ENCODE measurements at regions of chrX and their contacts with region 1.

Region 1: DNA sequence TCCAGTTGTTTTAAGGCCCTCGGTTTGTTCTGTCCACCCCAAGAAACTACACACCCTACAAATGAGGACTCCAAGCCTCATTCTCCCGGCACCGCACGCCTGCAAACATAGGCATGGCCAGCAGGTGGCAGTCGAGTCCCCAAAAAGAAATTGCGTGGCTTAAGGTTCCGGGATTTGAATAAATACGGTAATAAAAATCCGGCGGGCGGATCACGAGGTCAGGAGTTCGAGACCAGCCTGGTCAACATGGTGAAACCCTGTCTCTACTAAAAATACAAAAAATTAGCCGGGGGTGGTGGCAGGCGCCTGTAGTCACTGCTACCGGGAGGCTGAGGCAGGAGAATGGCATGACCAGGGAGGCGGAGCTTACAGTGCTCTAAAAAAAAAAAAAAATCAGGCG is 21.8 kb upstream of the CSF2RA start:
- DNase-seq: peak; percentile 55 to 88 (median 77)
- ATAC-seq: peak; percentile 81
- H3K4me3 ChIP-seq: no peak overlapping the region
- H3K4me3 Mint-ChIP-seq: peak overlapping the region in 9 of 10 donors; percentile 4 to 72 (median 63)
- H3K27ac ChIP-seq: no peak overlapping the region
- H3K27ac Mint-ChIP-seq: peak overlapping the region; percentile 44 to 84 (median 80)
- H3K4me1 ChIP-seq: peaks cover 6 to 18% of the 10 kb centered on the region in 2 donors
- H3K4me1 Mint-ChIP-seq: peaks cover 6 to 45% (median 38%) of the 10 kb centered on the region in 7 donors
- H3K27me3 ChIP-seq: no peaks in the 10 kb centered on the region
- H3K27me3 Mint-ChIP-seq: peaks cover 0 to 2% (median 0%) of the 10 kb centered on the region in 5 donors

Region 2: GRCh38 chrX:318739-319578 is 927.9 kb before region 1 on chrX and contains the start of gene GTPBP6:
- CTCF ChIA-PET with region 1: no interaction called
- POLR2A ChIA-PET with region 1: no interaction called
- intact Hi-C with region 1: loop called in 1 of 2 experiments (anchors 5 kb)
- DNase-seq: peak; percentile 93 to 100 (median 99)
- ATAC-seq: peak; percentile 80
- H3K4me3 ChIP-seq: peak within 1 kb of the TSS; percentile 70
- H3K4me3 Mint-ChIP-seq: peak within 1 kb of the TSS in 9 of 10 donors; percentile 85 to 98 (median 92)
- H3K27ac ChIP-seq: peak within 1 kb of the TSS; percentile 95
- H3K27ac Mint-ChIP-seq: peak within 1 kb of the TSS; percentile 93 to 100 (median 98)
- H3K4me1 ChIP-seq: peaks cover 15 to 16% of the 10 kb centered on the region in 2 donors
- H3K4me1 Mint-ChIP-seq: peaks cover 8 to 34% (median 25%) of the 10 kb centered on the region in 7 donors
- H3K27me3 ChIP-seq: no peaks in the 10 kb centered on the region
- H3K27me3 Mint-ChIP-seq: peaks cover 0 to 3% (median 0%) of the 10 kb centered on the region in 5 donors
- total RNA-seq, gene GTPBP6: 52.1 to 95.2 (median 75.1) TPM

Region 3: GRCh38 chrX:1124531-1124930 is 122.3 kb before region 1 on chrX:
- CTCF ChIA-PET with region 1: no interaction called
- POLR2A ChIA-PET with region 1: no interaction called
- intact Hi-C with region 1: no loop called
- DNase-seq: no peak
- ATAC-seq: no peak
- H3K4me3 ChIP-seq: no peak overlapping the region
- H3K4me3 Mint-ChIP-seq: no peak overlapping the region
- H3K27ac ChIP-seq: no peak overlapping the region
- H3K27ac Mint-ChIP-seq: no peak overlapping the region
- H3K4me1 ChIP-seq: no peaks in the 10 kb centered on the region
- H3K4me1 Mint-ChIP-seq: no peaks in the 10 kb centered on the region
- H3K27me3 ChIP-seq: peaks cover 0 to 4% of the 10 kb centered on the region in 2 donors
- H3K27me3 Mint-ChIP-seq: peaks cover under 1 to 44% (median 40%) of the 10 kb centered on the region in 5 donors

Region 4: GRCh38 chrX:1274786-1275185 is 28.0 kb after region 1 on chrX:
- CTCF ChIA-PET with region 1: no interaction called
- POLR2A ChIA-PET with region 1: no interaction called
- intact Hi-C with region 1: loop called in 1 of 2 experiments (anchors 2 kb)
- DNase-seq: no peak
- ATAC-seq: peak; percentile 90
- H3K4me3 ChIP-seq: no peak overlapping the region
- H3K4me3 Mint-ChIP-seq: no peak overlapping the region
- H3K27ac ChIP-seq: no peak overlapping the region
- H3K27ac Mint-ChIP-seq: no peak overlapping the region
- H3K4me1 ChIP-seq: peaks cover 0 to 1% of the 10 kb centered on the region in 2 donors
- H3K4me1 Mint-ChIP-seq: peaks cover 0 to 5% (median 0%) of the 10 kb centered on the region in 7 donors
- H3K27me3 ChIP-seq: no peaks in the 10 kb centered on the region
- H3K27me3 Mint-ChIP-seq: no peaks in the 10 kb centered on the region

Region 5: DNA sequence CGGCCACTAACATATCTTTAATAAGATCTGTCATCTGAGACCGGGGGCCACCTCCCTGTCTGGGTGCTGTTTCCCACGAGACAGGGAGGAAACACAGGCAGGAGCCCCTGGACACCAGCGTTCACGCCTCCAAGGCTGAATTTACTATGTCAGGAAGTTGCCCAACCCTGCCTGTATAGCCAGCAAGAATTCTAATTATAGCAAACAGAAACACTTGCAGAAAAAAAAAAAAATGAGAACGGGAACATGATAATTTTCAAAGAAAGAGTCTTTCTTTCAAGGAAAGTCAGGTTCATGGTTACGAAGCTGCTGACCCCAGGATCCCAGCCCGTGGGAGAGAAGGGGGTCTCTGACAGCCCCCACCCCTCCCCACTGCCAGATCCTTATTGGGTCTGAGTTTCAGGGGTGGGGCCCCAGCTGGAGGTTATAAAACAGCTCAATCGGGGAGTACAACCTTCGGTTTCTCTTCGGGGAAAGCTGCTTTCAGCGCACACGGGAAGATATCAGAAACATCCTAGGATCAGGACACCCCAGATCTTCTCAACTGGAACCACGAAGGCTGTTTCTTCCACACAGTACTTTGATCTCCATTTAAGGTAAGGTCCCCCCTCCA is 89.6 kb after region 1 on chrX and contains the start of gene IL3RA:
- CTCF ChIA-PET with region 1: no interaction called
- POLR2A ChIA-PET with region 1: no interaction called
- intact Hi-C with region 1: loop called in 1 of 2 experiments (anchors 5 kb)
- DNase-seq: peak in 4 of 9 donors; percentile 7 to 14 (median 12)
- ATAC-seq: peak; percentile 79
- H3K4me3 ChIP-seq: peak within 1 kb of the TSS; percentile 38
- H3K4me3 Mint-ChIP-seq: peak within 1 kb of the TSS; percentile 77 to 97 (median 84)
- H3K27ac ChIP-seq: no peak within 1 kb of the TSS
- H3K27ac Mint-ChIP-seq: peak within 1 kb of the TSS in 8 of 9 donors; percentile 0 to 89 (median 42)
- H3K4me1 ChIP-seq: no peaks in the 10 kb centered on the region
- H3K4me1 Mint-ChIP-seq: peaks cover 6 to 32% (median 9%) of the 10 kb centered on the region in 7 donors
- H3K27me3 ChIP-seq: no peaks in the 10 kb centered on the region
- H3K27me3 Mint-ChIP-seq: peaks cover 0 to 4% (median 3%) of the 10 kb centered on the region in 5 donors
- total RNA-seq, gene IL3RA: 7.9 to 23.7 (median 10.5) TPM in 3 of 5 experiments, not detected in the others

Region 6: GRCh38 chrX:1554469-1555210 is 307.8 kb after region 1 on chrX:
- CTCF ChIA-PET with region 1: no interaction called
- POLR2A ChIA-PET with region 1: no interaction called
- intact Hi-C with region 1: no loop called
- DNase-seq: peak in 8 of 9 donors; percentile 28 to 92 (median 83)
- ATAC-seq: peak; percentile 97
- H3K4me3 ChIP-seq: peak overlapping the region; percentile 22
- H3K4me3 Mint-ChIP-seq: peak overlapping the region; percentile 55 to 81 (median 72)
- H3K27ac ChIP-seq: peak overlapping the region; percentile 72
- H3K27ac Mint-ChIP-seq: peak overlapping the region; percentile 91 to 100 (median 98)
- H3K4me1 ChIP-seq: peaks cover 47 to 55% of the 10 kb centered on the region in 2 donors
- H3K4me1 Mint-ChIP-seq: peaks cover 35 to 85% (median 56%) of the 10 kb centered on the region in 7 donors
- H3K27me3 ChIP-seq: no peaks in the 10 kb centered on the region
- H3K27me3 Mint-ChIP-seq: peaks cover 0 to 11% (median 0%) of the 10 kb centered on the region in 5 donors

Region 7: DNA sequence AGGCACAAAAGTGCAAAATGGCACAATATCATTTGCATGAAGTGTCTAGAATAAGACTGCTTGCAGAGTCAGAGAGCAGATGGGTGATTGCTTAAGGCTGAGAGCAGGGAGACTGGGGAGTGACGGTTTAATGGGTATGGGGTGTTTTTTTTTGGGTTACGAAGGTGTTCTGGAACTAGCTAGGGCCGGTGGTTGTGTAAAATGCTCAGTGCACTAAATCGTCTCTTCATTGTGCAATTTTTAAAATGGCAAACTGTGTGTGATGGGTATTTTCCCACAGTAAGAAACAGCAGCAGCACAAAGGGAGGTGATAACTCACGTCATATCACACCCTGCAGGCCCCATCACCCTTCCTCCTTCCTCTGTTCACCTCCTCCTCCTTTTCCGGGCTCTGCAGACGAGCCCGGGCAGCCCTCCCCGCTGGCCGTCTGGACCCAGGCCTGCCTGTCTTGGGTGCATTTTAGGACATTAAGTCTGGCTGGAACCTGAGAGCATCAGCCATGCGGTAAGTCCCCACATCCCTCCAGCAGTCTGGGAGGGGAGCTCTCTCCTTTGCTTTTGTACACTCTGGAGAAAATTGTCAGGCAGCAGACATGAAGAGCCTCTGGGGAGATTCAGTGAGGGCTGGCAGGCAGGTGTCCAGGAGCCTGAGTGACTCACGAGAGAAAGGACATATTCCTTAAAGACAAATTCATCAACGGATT is 410.7 kb after region 1 on chrX:
- CTCF ChIA-PET with region 1: no interaction called
- POLR2A ChIA-PET with region 1: no interaction called
- intact Hi-C with region 1: loop called in 1 of 2 experiments (anchors 5 kb)
- DNase-seq: peak in 8 of 9 donors; percentile 18 to 73 (median 60)
- ATAC-seq: peak; percentile 69
- H3K4me3 ChIP-seq: peak overlapping the region; percentile 69
- H3K4me3 Mint-ChIP-seq: peak overlapping the region; percentile 77 to 99 (median 92)
- H3K27ac ChIP-seq: peak overlapping the region; percentile 80
- H3K27ac Mint-ChIP-seq: peak overlapping the region; percentile 90 to 99 (median 94)
- H3K4me1 ChIP-seq: peaks cover 21 to 24% of the 10 kb centered on the region in 2 donors
- H3K4me1 Mint-ChIP-seq: peaks cover 17 to 40% (median 36%) of the 10 kb centered on the region in 7 donors
- H3K27me3 ChIP-seq: no peaks in the 10 kb centered on the region
- H3K27me3 Mint-ChIP-seq: no peaks in the 10 kb centered on the region

Region 8: GRCh38 chrX:2627272-2627867 is 1380.6 kb after region 1 on chrX:
- CTCF ChIA-PET with region 1: no interaction called
- POLR2A ChIA-PET with region 1: no interaction called
- intact Hi-C with region 1: loop called in 1 of 2 experiments (anchors 1 kb)
- DNase-seq: peak in 7 of 9 donors; percentile 34 to 49 (median 40)
- ATAC-seq: peak; percentile 61
- H3K4me3 ChIP-seq: no peak overlapping the region
- H3K4me3 Mint-ChIP-seq: peak overlapping the region in 3 of 10 donors; percentile 19 to 33 (median 20)
- H3K27ac ChIP-seq: no peak overlapping the region
- H3K27ac Mint-ChIP-seq: peak overlapping the region in 6 of 9 donors; percentile 28 to 100 (median 56)
- H3K4me1 ChIP-seq: peaks cover 16% of the 10 kb centered on the region in 2 donors
- H3K4me1 Mint-ChIP-seq: peaks cover 23 to 53% (median 51%) of the 10 kb centered on the region in 7 donors
- H3K27me3 ChIP-seq: no peaks in the 10 kb centered on the region
- H3K27me3 Mint-ChIP-seq: no peaks in the 10 kb centered on the region

Measured in naive thymus-derived CD4-positive, alpha-beta T cell (primary cell).